Activated CD4-positive, alpha-beta memory T cell treated with anti-CD3 and anti-CD28 coated beads, Interleukin-2, amount 10 ng/mL, durations not matched to agents 7 days and 5 days (primary cell): ENCODE measurements at regions of chr2 and their contacts with region 1.

Region 1: DNA sequence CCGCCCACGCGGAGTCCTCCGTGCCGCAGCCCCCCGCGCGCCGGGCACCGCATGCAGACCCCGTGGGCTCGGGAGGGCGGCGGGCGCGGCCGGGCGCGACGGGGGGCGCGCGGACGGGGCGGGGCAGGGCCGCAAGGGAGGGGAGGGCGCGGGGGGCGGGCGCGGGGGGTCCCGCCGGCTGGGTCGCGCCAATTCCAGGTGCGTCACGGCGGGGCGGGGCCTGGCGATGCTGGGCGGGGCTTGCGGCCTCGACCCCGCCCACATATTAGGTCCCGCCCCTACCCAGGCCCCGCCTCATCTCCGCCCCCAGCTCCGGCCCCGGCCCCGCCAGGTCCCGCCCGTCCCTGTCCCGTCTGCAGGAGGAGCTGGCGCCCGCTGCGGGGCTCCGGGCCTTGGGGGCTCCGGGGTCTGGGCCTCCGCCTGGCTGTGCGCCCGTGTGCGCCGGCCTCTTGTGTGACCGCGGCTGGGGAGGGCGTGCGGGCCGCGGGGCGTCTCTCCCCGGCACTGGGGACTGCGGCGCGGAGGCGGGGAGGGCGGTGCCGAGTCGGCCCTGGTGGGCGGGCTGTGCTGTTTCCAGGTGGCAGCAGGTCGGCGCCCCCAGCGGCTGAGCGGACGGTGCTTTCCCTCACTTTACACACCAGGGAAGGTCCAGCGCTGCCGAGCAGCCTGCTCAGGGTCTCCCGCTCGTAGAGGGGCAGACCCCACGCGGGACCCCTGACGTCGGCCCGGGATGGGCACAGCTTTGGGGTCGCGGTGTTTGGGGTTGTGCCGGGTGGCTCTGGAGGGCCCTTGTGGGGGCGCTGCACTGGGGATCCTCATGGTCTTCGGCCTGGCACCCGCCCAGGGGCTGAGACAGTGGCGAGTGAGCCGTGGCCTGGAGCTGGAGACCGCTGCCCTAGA is 543 bp downstream of the ING5 start:
- DNase-seq: peak; percentile 85
- H3K4me3 Mint-ChIP-seq: peak overlapping the region; percentile 76
- H3K27ac Mint-ChIP-seq: peak overlapping the region; percentile 38
- H3K4me1 Mint-ChIP-seq: peaks cover 27% of the 10 kb centered on the region
- H3K27me3 Mint-ChIP-seq: no peaks in the 10 kb centered on the region

Region 2: GRCh38 chr2:241720560-241720959 is 18.2 kb after region 1 on chr2:
- CTCF ChIA-PET with region 1: interaction called, 13 read pairs
- POLR2A ChIA-PET with region 1: interaction called, 5 read pairs
- DNase-seq: no peak
- H3K4me3 Mint-ChIP-seq: no peak overlapping the region
- H3K27ac Mint-ChIP-seq: no peak overlapping the region
- H3K4me1 Mint-ChIP-seq: no peaks in the 10 kb centered on the region
- H3K27me3 Mint-ChIP-seq: no peaks in the 10 kb centered on the region

Region 3: DNA sequence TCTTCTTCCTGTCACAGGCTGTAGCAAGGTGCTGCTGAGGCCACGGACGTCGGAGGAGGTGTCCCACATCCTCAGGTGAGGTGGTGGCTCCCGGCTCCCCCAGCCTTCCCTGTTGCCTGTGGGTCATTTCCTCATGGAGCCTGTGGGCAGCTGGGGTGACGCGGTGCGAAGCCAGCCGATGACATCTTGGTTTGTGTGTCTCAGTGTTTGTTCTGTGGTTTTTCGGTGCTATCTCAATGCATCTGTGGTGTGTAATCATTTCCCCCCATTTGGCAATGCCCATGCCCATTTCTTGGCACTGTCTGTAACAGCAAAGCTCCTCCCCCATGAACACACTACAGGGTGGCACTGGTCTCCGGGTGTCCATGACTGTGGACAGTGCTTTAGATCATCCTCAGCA is 38.6 kb after region 1 on chr2:
- CTCF ChIA-PET with region 1: no interaction called
- POLR2A ChIA-PET with region 1: interaction called, 19 read pairs
- DNase-seq: peak; percentile 61
- H3K4me3 Mint-ChIP-seq: no peak overlapping the region
- H3K27ac Mint-ChIP-seq: peak overlapping the region; percentile 1
- H3K4me1 Mint-ChIP-seq: peaks cover 47% of the 10 kb centered on the region
- H3K27me3 Mint-ChIP-seq: peaks cover 1% of the 10 kb centered on the region

Region 4: DNA sequence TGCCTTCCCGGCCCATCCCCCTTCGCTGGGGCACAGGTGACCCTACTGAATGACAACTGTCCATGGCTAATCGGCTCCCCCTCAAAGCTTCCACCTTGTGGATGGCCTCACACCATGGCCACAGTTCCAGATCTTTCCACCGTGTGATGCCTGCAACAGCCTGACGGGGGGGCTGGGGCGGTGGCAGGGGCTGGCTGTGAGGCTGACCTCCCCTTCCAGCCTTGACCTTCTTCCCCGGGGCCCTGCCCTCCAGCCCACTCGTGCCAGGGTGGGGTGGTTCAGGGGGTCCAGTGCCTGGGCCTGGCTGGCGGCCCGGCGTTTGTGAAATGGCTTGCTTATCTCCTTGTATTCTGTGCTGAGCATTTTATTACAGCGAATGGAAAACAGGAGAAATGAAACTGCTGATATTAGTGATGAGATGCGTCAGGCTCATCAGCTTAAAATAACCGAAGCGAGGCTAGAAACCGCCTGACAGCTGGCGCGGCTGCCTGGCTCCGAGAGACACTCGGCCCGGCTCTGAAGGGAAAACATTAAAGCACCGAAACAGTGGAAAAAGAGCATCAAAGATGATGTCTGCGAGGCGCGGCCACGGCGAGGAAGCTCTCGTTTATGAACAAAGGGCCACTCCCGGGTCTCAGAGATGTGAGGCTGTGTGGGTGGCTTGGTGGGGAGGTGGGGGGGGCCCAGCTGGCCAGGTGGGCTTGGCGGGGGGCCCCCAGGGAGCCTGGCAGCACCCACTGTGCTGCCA is 157.2 kb after region 1 on chr2:
- CTCF ChIA-PET with region 1: interaction called, 3 read pairs
- POLR2A ChIA-PET with region 1: interaction called, 14 read pairs
- DNase-seq: peak; percentile 63
- H3K4me3 Mint-ChIP-seq: peak overlapping the region; percentile 73
- H3K27ac Mint-ChIP-seq: peak overlapping the region; percentile 92
- H3K4me1 Mint-ChIP-seq: peaks cover 66% of the 10 kb centered on the region
- H3K27me3 Mint-ChIP-seq: peaks cover 6% of the 10 kb centered on the region

Region 5: GRCh38 chr2:241877989-241878970 is 175.9 kb after region 1 on chr2:
- CTCF ChIA-PET with region 1: interaction called, 40 read pairs
- POLR2A ChIA-PET with region 1: interaction called, 17 read pairs
- DNase-seq: peak; percentile 82
- H3K4me3 Mint-ChIP-seq: no peak overlapping the region
- H3K27ac Mint-ChIP-seq: no peak overlapping the region
- H3K4me1 Mint-ChIP-seq: peaks cover 37% of the 10 kb centered on the region
- H3K27me3 Mint-ChIP-seq: no peaks in the 10 kb centered on the region